ENCODE measurements at regions of chr18 and their contacts with region 1.

Region 1: GRCh38 chr18:37188016-37188791 is 359.3 kb downstream of the KIAA1328 start:
- DNase-seq: no peak
- H3K4me3 ChIP-seq: no peak overlapping the region
- H3K27ac ChIP-seq: no peak overlapping the region
- H3K4me1 ChIP-seq: no peaks in the 10 kb centered on the region
- H3K27me3 ChIP-seq: no peaks in the 10 kb centered on the region
- CTCF ChIP-seq: no peak
- EP300 ChIP-seq: no peak
- POLR2A ChIP-seq: no peak

Region 2: GRCh38 chr18:37055137-37055802 is 132.9 kb before region 1 on chr18:
- in situ Hi-C with region 1: loop called in 1 of 4 experiments (anchors 25 kb)
- intact Hi-C with region 1: no loop called
- DNase-seq: no peak
- H3K4me3 ChIP-seq: no peak overlapping the region
- H3K27ac ChIP-seq: no peak overlapping the region
- H3K4me1 ChIP-seq: no peaks in the 10 kb centered on the region
- H3K27me3 ChIP-seq: no peaks in the 10 kb centered on the region
- CTCF ChIP-seq: no peak
- EP300 ChIP-seq: no peak
- POLR2A ChIP-seq: no peak

Region 3: DNA sequence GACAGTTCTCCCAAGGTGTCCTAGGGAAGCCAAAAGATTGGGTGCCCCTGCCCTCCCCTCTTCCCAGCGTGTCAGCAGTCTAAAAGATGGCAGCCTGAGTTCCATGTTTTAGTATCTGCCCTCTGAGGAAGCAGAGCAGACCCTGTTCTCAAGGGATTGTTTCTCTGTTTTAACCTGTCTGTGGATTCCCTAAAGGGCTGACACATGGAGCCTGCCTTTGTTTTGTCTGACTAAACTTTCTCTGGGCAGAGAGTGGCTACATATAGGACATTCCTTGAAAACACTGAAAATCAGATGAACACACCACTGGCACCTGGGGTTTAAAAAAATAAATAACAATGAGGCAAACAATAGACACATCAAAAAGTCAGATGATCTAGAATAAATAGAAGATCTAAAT is 21.7 kb before region 1 on chr18:
- in situ Hi-C with region 1: no loop called
- intact Hi-C with region 1: loop called (anchors 1 kb)
- DNase-seq: no peak
- H3K4me3 ChIP-seq: no peak overlapping the region
- H3K27ac ChIP-seq: no peak overlapping the region
- H3K4me1 ChIP-seq: peaks cover 0 to 19% (median 2%) of the 10 kb centered on the region in 4 donors
- H3K27me3 ChIP-seq: no peaks in the 10 kb centered on the region
- CTCF ChIP-seq: no peak
- EP300 ChIP-seq: no peak
- POLR2A ChIP-seq: no peak